Vagina (tissue), 2 donors: ENCODE measurements at regions of chr1 and their contacts with region 1.

Region 1: DNA sequence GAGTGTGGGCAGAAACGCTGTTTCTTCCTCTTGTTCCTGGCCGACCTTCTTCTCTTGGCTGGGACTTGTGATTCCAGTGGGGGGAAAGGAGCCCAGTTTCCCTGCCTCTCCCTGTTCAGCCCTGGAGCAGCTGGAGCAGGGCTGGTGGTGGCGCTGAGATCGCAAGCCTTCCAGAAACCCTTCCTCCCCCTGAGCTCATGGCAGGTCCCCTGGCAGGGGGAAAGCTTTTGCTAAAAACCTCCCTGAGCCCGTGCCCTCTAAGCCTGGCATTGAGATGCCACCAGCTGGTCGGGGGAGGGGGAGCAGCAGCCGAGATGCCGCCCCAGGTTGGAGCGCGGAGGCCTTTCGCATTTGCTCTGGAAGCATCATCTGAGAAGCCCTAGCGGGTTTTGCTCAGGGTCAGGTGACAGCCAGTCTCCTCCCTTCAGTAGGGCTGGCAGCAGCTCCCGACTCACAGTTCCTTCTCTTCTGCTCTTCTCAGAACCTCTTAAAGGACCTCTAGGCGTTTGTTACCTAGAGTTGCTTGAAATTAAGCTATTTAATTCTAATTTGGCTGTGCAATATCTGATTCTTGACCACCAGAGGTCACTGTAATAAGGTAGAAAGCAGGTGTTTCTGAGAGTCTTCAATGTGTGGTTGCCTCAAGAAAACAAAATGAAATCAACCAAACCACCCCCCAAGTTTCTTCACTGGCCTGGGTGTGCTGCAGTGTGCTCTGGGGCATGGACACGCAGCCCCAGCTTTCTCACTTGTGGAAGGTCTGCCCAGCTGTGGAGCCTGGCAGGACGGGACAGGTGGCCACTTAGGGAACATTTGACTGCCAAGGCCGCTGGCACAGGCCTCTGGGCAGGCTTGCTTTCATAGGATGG is 257.3 kb downstream of the CAMTA1 start:
- DNase-seq: no peak
- H3K4me3 ChIP-seq: no peak overlapping the region
- H3K27ac ChIP-seq: no peak overlapping the region
- H3K4me1 ChIP-seq: no peaks in the 10 kb centered on the region
- H3K27me3 ChIP-seq: peaks cover 3% of the 10 kb centered on the region
- CTCF ChIP-seq: peak in 1 of 3 experiments; percentile 39
- POLR2A ChIP-seq: no peak

Region 2: GRCh38 chr1:6667139-6667538 is 375.4 kb before region 1 on chr1:
- intact Hi-C with region 1: no loop called
- DNase-seq: no peak
- H3K4me3 ChIP-seq: no peak overlapping the region
- H3K27ac ChIP-seq: no peak overlapping the region
- H3K4me1 ChIP-seq: no peaks in the 10 kb centered on the region
- H3K27me3 ChIP-seq: no peaks in the 10 kb centered on the region
- CTCF ChIP-seq: no peak
- POLR2A ChIP-seq: no peak

Region 3: GRCh38 chr1:7026169-7026568 is 16.4 kb before region 1 on chr1:
- intact Hi-C with region 1: no loop called
- DNase-seq: no peak
- H3K4me3 ChIP-seq: no peak overlapping the region
- H3K27ac ChIP-seq: no peak overlapping the region
- H3K4me1 ChIP-seq: no peaks in the 10 kb centered on the region
- H3K27me3 ChIP-seq: no peaks in the 10 kb centered on the region
- CTCF ChIP-seq: no peak
- POLR2A ChIP-seq: no peak

Region 4: DNA sequence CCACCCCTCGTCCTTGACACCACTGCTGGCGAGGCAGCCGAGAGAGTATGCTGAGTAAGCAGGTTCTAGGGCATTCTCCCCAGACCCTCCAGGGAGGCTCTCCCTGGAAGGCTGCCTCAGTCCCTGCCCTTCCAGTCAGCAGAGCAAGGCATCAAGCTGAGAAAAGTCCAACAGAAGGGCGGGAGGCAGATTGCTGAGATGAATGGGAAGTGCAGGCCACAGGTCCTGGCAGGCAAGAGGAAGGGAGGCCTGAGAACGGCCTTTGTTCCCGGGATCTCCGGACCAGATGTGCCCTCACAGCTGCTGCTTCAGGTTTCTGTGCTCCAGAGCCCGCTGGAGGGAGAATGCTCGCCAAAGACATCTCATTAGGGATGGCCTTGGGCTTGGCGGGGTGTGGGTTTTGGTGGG is 458.5 kb after region 1 on chr1:
- intact Hi-C with region 1: no loop called
- DNase-seq: no peak
- H3K4me3 ChIP-seq: no peak overlapping the region
- H3K27ac ChIP-seq: no peak overlapping the region
- H3K4me1 ChIP-seq: peaks cover 5% of the 10 kb centered on the region
- H3K27me3 ChIP-seq: no peaks in the 10 kb centered on the region
- CTCF ChIP-seq: no peak
- POLR2A ChIP-seq: no peak

Region 5: DNA sequence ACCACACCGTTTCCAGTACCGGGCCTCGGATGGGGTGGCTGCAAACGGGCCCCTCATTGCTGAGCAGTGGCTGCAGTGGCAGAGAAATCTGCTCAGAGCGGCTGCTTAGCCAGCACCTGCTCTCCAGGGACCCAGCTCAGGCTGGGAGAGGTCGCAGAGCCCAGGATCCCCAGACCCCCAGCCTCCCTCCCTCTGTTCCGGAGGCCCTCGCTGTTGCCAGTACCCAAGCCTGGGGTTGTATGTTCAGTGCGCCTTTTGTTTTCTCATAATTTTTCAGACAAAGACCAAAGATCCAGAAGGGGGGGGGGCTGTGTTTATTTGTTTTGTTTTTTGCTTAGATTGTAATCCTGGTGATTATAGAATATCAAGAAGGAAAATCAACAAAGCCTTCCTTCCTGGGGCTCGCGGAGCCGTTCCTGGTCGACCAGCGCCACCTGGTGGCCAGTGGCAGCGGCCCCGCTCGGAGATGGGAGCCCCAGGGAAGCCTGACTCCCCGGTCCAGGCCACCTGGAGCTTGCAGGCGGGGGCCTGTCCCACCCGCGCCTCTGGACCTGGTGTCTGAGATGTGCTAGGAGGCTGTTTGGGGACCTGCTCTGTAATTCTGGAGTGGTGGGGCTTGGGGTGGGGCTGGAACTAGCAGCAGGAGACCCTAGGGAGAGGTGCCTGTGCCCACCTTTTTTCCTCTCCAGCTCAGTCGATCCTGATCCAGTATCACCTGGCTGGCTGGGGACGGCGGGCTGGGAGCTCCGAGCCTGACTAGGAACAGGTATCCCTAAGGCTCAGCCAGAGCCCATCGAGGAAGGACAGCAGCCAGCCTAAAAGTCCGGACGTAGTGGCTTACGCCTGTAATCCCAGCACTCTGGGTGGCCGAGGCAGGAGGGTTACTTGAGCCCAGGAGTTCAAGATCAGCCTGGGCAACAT is 604.7 kb after region 1 on chr1:
- intact Hi-C with region 1: loop called (anchors 5 kb)
- DNase-seq: no peak
- H3K4me3 ChIP-seq: no peak overlapping the region
- H3K27ac ChIP-seq: no peak overlapping the region
- H3K4me1 ChIP-seq: no peaks in the 10 kb centered on the region
- H3K27me3 ChIP-seq: no peaks in the 10 kb centered on the region
- CTCF ChIP-seq: peak; percentile 75 to 97 (median 88)
- POLR2A ChIP-seq: no peak